ENCODE measurements at regions of chr20 and their contacts with region 1.

Region 1: DNA sequence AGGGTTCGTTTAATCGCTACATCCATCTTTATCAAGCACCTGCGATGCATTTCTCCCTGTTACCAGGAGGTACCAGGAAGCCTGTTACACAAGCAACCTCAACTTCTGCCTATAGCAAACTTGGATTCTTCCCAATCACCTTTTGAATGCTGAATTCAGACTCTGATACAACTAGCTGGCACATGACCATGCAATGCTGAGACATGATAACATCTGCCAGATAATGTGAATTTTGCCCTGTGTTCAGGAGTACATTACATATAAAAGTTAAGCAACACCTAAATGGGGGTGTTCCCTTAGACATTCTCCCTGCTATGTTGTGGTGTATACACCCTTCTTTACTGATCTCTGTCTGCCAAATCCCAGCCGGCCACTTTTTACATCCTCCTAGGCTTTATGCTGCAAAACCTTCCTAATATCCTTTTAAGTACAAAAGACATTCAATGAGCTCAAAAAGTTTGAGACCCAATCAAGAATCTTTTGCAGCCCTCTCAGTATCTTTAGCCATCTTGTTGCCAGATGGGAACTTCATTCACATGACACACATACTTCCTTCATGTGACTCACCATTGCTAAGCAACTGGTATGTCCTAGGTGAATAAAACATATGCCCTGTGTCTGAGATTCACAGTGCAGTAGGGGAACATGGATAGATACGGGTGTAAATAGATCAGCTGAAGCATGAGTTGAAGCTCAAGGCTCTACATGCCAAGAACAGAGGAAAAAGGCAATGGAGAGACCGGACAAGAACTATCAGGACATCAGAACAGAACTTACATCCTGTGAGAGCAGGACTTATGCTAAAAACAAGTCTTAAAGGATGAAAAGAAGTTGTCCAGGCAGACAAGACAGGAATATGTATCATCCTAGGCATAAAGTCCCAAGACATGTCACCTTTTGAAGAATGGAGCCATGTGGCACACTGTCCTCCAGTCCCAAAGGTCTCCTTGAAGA is 84.3 kb downstream of the ZHX3 start:
- DNase-seq: no peak
- ATAC-seq: peak; percentile 41
- H3K4me3 ChIP-seq: no peak overlapping the region
- H3K4me3 Mint-ChIP-seq: peak overlapping the region; percentile 17
- H3K27ac ChIP-seq: no peak overlapping the region
- H3K27ac Mint-ChIP-seq: peak overlapping the region; percentile 8
- H3K4me1 ChIP-seq: peaks cover 9 to 15% of the 10 kb centered on the region in 2 donors
- H3K4me1 Mint-ChIP-seq: peaks cover 26% of the 10 kb centered on the region
- H3K27me3 ChIP-seq: no peaks in the 10 kb centered on the region
- H3K27me3 Mint-ChIP-seq: no peaks in the 10 kb centered on the region
- CTCF ChIP-seq: no peak

Region 2: DNA sequence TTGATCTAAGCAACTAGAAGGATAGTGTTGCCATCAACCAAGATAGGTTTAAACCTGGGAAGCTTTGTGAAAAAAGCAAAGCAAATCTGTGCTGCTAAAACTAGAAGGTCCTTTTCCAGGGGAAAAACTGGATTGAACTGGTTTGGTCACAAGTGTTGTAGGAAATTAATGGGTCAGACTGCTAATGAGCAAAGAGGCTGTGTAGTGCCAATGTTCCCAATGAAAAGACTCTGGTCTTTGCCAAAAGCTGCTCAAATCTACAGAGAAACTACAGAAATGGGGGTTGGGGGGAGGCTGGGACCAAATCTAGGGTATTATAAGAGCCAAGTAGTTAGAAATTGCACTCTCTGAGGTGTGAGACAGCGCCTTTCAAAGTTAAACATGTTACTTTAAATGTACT is 11.0 kb before region 1 on chr20:
- CTCF ChIA-PET with region 1: interaction called, 14 read pairs
- POLR2A ChIA-PET with region 1: no interaction called
- intact Hi-C with region 1: no loop called
- DNase-seq: no peak
- ATAC-seq: no peak
- H3K4me3 ChIP-seq: no peak overlapping the region
- H3K4me3 Mint-ChIP-seq: no peak overlapping the region
- H3K27ac ChIP-seq: no peak overlapping the region
- H3K27ac Mint-ChIP-seq: no peak overlapping the region
- H3K4me1 ChIP-seq: no peaks in the 10 kb centered on the region
- H3K4me1 Mint-ChIP-seq: peaks cover 4% of the 10 kb centered on the region
- H3K27me3 ChIP-seq: no peaks in the 10 kb centered on the region
- H3K27me3 Mint-ChIP-seq: no peaks in the 10 kb centered on the region
- CTCF ChIP-seq: no peak

Region 3: GRCh38 chr20:41249406-41250281 is 16.4 kb after region 1 on chr20:
- CTCF ChIA-PET with region 1: interaction called, 24 read pairs
- POLR2A ChIA-PET with region 1: no interaction called
- intact Hi-C with region 1: loop called (anchors 1 kb)
- DNase-seq: peak; percentile 39
- ATAC-seq: peak; percentile 77
- H3K4me3 ChIP-seq: peak overlapping the region in 1 of 5 experiments; percentile 40
- H3K4me3 Mint-ChIP-seq: peak overlapping the region; percentile 67
- H3K27ac ChIP-seq: peak overlapping the region; percentile 42 to 49
- H3K27ac Mint-ChIP-seq: peak overlapping the region; percentile 85
- H3K4me1 ChIP-seq: peaks cover 53 to 57% of the 10 kb centered on the region in 2 donors
- H3K4me1 Mint-ChIP-seq: peaks cover 52% of the 10 kb centered on the region
- H3K27me3 ChIP-seq: no peaks in the 10 kb centered on the region
- H3K27me3 Mint-ChIP-seq: no peaks in the 10 kb centered on the region
- CTCF ChIP-seq: no peak

Region 4: DNA sequence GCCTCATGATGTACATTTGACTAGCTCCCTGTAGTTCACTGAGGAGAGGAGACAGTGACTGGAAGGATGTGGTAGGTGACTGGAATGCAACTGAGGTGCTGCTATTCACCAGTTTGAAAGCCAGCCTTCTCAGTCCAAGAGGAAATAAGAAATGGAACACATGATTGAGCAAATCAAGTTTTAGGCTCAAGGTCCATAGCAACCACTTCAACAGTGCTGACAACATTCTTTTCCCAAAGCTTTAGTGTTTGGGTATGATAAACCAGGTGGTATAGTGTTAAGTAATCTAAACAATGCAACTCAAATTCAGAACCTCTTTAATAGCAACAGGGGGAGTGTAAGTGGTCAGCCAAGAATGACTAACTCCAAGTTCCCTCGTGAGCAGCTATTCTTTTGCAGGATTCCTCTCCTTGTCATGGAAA is 75.1 kb after region 1 on chr20:
- CTCF ChIA-PET with region 1: interaction called, 10 read pairs
- POLR2A ChIA-PET with region 1: no interaction called
- intact Hi-C with region 1: loop called (anchors 2 kb)
- DNase-seq: no peak
- ATAC-seq: no peak
- H3K4me3 ChIP-seq: no peak overlapping the region
- H3K4me3 Mint-ChIP-seq: no peak overlapping the region
- H3K27ac ChIP-seq: no peak overlapping the region
- H3K27ac Mint-ChIP-seq: no peak overlapping the region
- H3K4me1 ChIP-seq: peaks cover 19 to 22% of the 10 kb centered on the region in 2 donors
- H3K4me1 Mint-ChIP-seq: peaks cover 28% of the 10 kb centered on the region
- H3K27me3 ChIP-seq: no peaks in the 10 kb centered on the region
- H3K27me3 Mint-ChIP-seq: no peaks in the 10 kb centered on the region
- CTCF ChIP-seq: no peak

Region 5: GRCh38 chr20:41408156-41408794 is 175.0 kb after region 1 on chr20:
- CTCF ChIA-PET with region 1: no interaction called
- POLR2A ChIA-PET with region 1: no interaction called
- intact Hi-C with region 1: no loop called
- DNase-seq: no peak
- ATAC-seq: no peak
- H3K4me3 ChIP-seq: no peak overlapping the region
- H3K4me3 Mint-ChIP-seq: no peak overlapping the region
- H3K27ac ChIP-seq: no peak overlapping the region
- H3K27ac Mint-ChIP-seq: peak overlapping the region; percentile 32
- H3K4me1 ChIP-seq: peaks cover 0 to 3% of the 10 kb centered on the region in 2 donors
- H3K4me1 Mint-ChIP-seq: peaks cover 3% of the 10 kb centered on the region
- H3K27me3 ChIP-seq: no peaks in the 10 kb centered on the region
- H3K27me3 Mint-ChIP-seq: no peaks in the 10 kb centered on the region
- CTCF ChIP-seq: no peak

Measured in B cell (primary cell).